ENCODE measurements at regions of chr7 and their contacts with region 1.

Region 1: DNA sequence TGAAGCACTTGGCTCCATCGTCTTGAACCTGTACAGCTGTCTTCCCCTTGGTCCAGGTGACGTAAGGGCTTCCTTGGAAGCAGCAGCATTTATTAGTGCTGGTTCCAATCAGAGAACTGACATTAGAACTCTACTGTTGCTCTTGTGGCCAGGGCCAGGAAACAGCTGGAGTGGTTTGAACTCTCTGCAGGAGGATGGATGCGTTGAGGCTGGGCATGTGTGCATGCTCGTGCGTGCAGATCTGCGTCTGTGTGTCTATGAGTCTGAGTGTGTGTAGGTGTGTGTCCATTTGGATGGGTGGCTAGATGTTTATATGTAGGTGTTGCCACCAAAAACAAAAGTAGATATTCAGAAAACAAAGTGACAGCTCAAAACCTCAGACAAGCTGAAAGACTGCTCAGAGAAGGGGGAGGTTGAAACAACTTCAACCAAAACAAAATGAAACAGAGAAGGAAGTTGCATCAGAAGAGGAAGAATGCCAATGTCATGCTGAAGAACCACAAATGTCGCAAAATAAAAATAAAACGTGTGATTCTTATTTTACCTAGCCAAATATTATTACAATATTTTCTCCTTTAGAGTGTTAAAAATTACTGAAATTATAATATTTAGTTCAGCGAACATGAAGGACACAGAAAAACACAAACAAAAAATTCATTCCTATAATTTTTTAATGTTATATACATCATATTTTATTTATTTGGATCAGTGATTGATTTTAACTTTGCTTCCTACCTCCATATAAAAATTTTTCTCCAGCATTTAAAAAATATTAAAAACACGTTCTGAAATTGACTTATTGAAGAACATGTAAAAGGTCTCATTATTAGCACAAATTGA is 96.1 kb upstream of the MKLN1 start:
- DNase-seq: peak; percentile 30 to 83 (median 74)
- ATAC-seq: peak; percentile 85
- H3K4me3 ChIP-seq: peak overlapping the region; percentile 33
- H3K4me3 Mint-ChIP-seq: peak overlapping the region; percentile 63 to 88 (median 82)
- H3K27ac ChIP-seq: peak overlapping the region; percentile 59
- H3K27ac Mint-ChIP-seq: peak overlapping the region; percentile 66 to 94 (median 91)
- H3K4me1 ChIP-seq: peaks cover 24 to 28% of the 10 kb centered on the region in 2 donors
- H3K4me1 Mint-ChIP-seq: peaks cover 21 to 67% (median 45%) of the 10 kb centered on the region in 7 donors
- H3K27me3 ChIP-seq: no peaks in the 10 kb centered on the region
- H3K27me3 Mint-ChIP-seq: no peaks in the 10 kb centered on the region

Region 2: DNA sequence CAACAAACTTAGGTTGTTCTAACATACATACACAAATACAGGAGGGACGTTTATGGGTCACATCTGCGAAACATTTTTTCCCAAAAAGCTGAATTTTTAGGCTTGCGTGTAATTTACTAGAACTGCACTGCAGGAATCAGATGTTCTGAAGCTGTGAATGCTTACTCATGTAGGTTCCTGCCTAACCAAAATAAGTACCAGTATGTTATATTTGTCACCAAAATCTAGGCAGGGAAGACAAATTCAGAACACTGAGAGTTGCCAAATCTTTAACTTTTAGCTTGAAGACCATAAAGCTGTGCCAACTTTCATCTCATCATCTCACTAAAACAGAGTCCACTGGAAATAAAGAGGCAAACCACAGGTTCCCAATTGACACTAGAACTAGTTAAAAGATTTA is 1284.6 kb before region 1 on chr7:
- CTCF ChIA-PET with region 1: no interaction called
- POLR2A ChIA-PET with region 1: no interaction called
- intact Hi-C with region 1: no loop called
- DNase-seq: no peak
- ATAC-seq: no peak
- H3K4me3 ChIP-seq: no peak overlapping the region
- H3K4me3 Mint-ChIP-seq: peak overlapping the region in 2 of 10 donors; percentile 9 to 51
- H3K27ac ChIP-seq: no peak overlapping the region
- H3K27ac Mint-ChIP-seq: peak overlapping the region in 3 of 9 donors; percentile 29 to 66 (median 48)
- H3K4me1 ChIP-seq: peaks cover 20 to 28% of the 10 kb centered on the region in 2 donors
- H3K4me1 Mint-ChIP-seq: peaks cover 8 to 41% (median 30%) of the 10 kb centered on the region in 7 donors
- H3K27me3 ChIP-seq: no peaks in the 10 kb centered on the region
- H3K27me3 Mint-ChIP-seq: no peaks in the 10 kb centered on the region

Region 3: DNA sequence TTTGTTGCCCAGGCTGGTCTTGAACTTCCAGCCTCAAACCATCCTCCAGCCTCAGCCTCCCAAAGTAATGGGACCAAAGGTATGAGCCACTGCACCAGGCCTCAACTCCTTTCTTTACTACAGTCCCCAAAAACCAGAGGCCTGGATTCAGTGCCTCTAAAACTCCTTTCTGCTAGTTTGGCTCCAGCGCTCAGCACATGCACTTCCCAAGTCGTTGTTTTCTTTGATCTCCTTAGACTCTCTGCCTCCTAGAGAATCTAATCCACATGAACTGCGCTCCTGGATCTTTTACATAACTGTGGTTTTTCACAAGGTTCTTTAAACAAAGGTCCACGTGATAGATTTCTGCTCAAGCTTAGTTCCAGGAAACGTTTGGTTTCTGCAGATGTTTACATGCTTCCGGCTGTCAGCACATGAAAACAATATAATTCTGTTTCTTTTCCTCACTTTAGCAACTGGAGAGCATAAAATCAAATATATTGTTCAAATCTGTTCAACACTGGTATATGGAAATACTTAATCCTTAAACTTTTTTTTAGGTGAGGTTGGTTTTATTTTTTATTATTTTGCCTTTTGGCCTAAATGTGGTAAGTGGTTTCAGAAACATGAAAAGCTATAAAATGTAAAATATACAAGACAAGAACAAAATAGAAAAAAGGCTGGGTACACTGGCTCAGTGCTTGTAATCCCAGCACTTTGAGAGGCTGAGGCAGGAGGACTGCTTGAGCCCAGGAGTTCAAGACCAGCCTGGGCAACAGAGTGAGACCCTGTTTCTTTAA is 174.4 kb before region 1 on chr7:
- CTCF ChIA-PET with region 1: no interaction called
- POLR2A ChIA-PET with region 1: no interaction called
- intact Hi-C with region 1: loop called (anchors 1 kb)
- DNase-seq: peak in 7 of 9 donors; percentile 56 to 82 (median 76)
- ATAC-seq: peak; percentile 67
- H3K4me3 ChIP-seq: peak overlapping the region; percentile 11
- H3K4me3 Mint-ChIP-seq: peak overlapping the region; percentile 72 to 93 (median 82)
- H3K27ac ChIP-seq: peak overlapping the region; percentile 76
- H3K27ac Mint-ChIP-seq: peak overlapping the region; percentile 94 to 100 (median 98)
- H3K4me1 ChIP-seq: peaks cover 69 to 77% of the 10 kb centered on the region in 2 donors
- H3K4me1 Mint-ChIP-seq: peaks cover 54 to 87% (median 72%) of the 10 kb centered on the region in 7 donors
- H3K27me3 ChIP-seq: no peaks in the 10 kb centered on the region
- H3K27me3 Mint-ChIP-seq: no peaks in the 10 kb centered on the region

Region 4: DNA sequence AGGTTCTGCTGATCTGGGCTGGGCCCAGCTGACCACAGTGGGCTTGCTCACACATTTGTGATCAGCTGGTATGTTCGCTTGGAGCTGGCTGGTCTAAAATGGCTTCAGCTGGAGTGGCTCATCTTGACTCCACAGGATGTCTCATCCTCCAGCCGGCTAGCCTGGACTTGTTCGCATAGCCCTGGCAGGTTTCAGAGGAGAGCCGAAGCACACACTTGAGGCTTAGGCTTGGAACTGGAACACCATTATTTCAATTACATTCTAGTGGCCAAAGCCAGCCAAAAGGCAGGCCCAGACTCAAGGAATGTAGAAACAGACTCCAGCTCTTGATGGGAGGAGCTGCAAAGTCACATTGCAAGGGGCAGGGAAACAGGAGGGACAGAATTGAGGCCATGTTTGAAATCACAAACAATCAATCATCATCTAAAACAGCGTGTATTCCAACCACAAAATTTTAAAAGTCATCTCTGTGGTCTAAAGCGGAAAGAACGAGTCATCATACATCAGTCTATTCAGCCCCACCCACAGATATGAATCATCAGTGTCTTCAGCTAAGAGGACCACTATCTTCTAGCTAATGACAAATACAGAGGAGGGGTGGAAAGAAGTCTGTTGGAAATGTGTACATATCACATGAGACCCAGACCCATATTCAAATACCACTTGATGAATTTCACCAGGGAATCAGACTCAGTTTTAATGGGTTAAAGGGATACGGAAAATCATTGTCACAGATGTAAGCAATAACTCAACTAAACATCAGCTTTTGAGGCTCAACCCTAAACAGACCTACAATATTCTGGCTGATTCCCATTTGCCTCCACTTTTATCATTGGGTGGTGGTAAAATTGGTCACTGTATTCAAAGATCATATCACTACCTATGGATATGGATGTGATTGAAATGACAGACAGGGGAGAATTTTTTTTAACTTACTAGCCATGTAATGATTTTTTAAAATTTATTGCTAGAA is 42.9 kb before region 1 on chr7:
- CTCF ChIA-PET with region 1: no interaction called
- POLR2A ChIA-PET with region 1: interaction called, 3 read pairs
- intact Hi-C with region 1: loop called (anchors 1 kb)
- DNase-seq: peak; percentile 5 to 62 (median 29)
- ATAC-seq: peak; percentile 95
- H3K4me3 ChIP-seq: no peak overlapping the region
- H3K4me3 Mint-ChIP-seq: peak overlapping the region in 2 of 10 donors; percentile 27 to 56
- H3K27ac ChIP-seq: no peak overlapping the region
- H3K27ac Mint-ChIP-seq: peak overlapping the region in 4 of 9 donors; percentile 15 to 86 (median 52)
- H3K4me1 ChIP-seq: peaks cover 15 to 28% of the 10 kb centered on the region in 2 donors
- H3K4me1 Mint-ChIP-seq: peaks cover 5 to 51% (median 16%) of the 10 kb centered on the region in 7 donors
- H3K27me3 ChIP-seq: no peaks in the 10 kb centered on the region
- H3K27me3 Mint-ChIP-seq: no peaks in the 10 kb centered on the region

Region 5: GRCh38 chr7:131302876-131303707 is 71.5 kb after region 1 on chr7:
- CTCF ChIA-PET with region 1: interaction called, 5 read pairs
- POLR2A ChIA-PET with region 1: no interaction called
- intact Hi-C with region 1: loop called in 1 of 2 experiments (anchors 1 kb)
- DNase-seq: peak in 6 of 9 donors; percentile 16 to 34 (median 24)
- ATAC-seq: peak; percentile 45
- H3K4me3 ChIP-seq: no peak overlapping the region
- H3K4me3 Mint-ChIP-seq: no peak overlapping the region
- H3K27ac ChIP-seq: no peak overlapping the region
- H3K27ac Mint-ChIP-seq: peak overlapping the region in 1 of 9 donors; percentile 68
- H3K4me1 ChIP-seq: no peaks in the 10 kb centered on the region
- H3K4me1 Mint-ChIP-seq: no peaks in the 10 kb centered on the region
- H3K27me3 ChIP-seq: no peaks in the 10 kb centered on the region
- H3K27me3 Mint-ChIP-seq: peaks cover 0 to 4% (median 0%) of the 10 kb centered on the region in 5 donors

Region 6: GRCh38 chr7:131501422-131501821 is 269.8 kb after region 1 on chr7:
- CTCF ChIA-PET with region 1: interaction called, 6 read pairs
- POLR2A ChIA-PET with region 1: no interaction called
- intact Hi-C with region 1: loop called in 1 of 2 experiments (anchors 1 kb)
- DNase-seq: peak in 8 of 9 donors; percentile 40 to 69 (median 56)
- ATAC-seq: peak; percentile 89
- H3K4me3 ChIP-seq: no peak overlapping the region
- H3K4me3 Mint-ChIP-seq: peak overlapping the region in 6 of 10 donors; percentile 7 to 40 (median 20)
- H3K27ac ChIP-seq: peak overlapping the region; percentile 18
- H3K27ac Mint-ChIP-seq: peak overlapping the region; percentile 10 to 86 (median 67)
- H3K4me1 ChIP-seq: peaks cover 7 to 26% of the 10 kb centered on the region in 2 donors
- H3K4me1 Mint-ChIP-seq: peaks cover 5 to 39% (median 31%) of the 10 kb centered on the region in 7 donors
- H3K27me3 ChIP-seq: no peaks in the 10 kb centered on the region
- H3K27me3 Mint-ChIP-seq: no peaks in the 10 kb centered on the region

Measured in naive thymus-derived CD4-positive, alpha-beta T cell (primary cell).